Activated CD4-positive, alpha-beta T cell treated with anti-CD3 and anti-CD28 coated beads for 36 hours (primary cell): ENCODE measurements at regions of chr19 and their contacts with region 1.

Region 1: GRCh38 chr19:50556282-50557008 is 11.8 kb downstream of the LRRC4B start:
- DNase-seq: peak; percentile 92
- ATAC-seq: peak; percentile 89
- H3K4me3 Mint-ChIP-seq: peak overlapping the region; percentile 68
- H3K27ac Mint-ChIP-seq: peak overlapping the region; percentile 85
- H3K4me1 Mint-ChIP-seq: peaks cover 2% of the 10 kb centered on the region
- H3K27me3 Mint-ChIP-seq: peaks cover 53% of the 10 kb centered on the region

Region 2: GRCh38 chr19:50486823-50487511 is 69.5 kb before region 1 on chr19:
- CTCF ChIA-PET with region 1: interaction called, 3 read pairs
- POLR2A ChIA-PET with region 1: no interaction called
- intact Hi-C with region 1: loop called in 1 of 2 experiments (anchors 5 kb)
- DNase-seq: peak; percentile 87
- ATAC-seq: peak; percentile 52
- H3K4me3 Mint-ChIP-seq: no peak overlapping the region
- H3K27ac Mint-ChIP-seq: no peak overlapping the region
- H3K4me1 Mint-ChIP-seq: peaks cover 25% of the 10 kb centered on the region
- H3K27me3 Mint-ChIP-seq: no peaks in the 10 kb centered on the region

Region 3: DNA sequence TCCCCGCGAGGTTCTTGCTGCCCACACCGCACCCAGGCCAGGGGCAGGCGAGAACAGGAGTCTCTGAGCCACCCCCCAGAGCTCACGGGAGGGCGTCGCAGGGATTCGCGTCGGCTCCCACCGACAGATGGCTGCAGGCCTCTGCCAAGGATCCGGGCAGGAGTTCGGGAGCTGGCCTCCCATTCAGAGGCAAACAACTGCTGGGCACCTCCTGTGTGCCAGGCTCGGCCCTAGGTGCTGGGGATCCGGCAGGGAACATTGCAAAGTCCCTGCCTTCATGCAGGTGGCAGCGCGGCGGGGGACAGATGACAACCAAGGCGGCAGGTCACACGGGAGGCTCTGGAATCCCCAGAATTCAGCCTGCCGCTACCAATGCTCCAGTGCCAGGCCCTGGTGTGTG is 13.5 kb before region 1 on chr19:
- CTCF ChIA-PET with region 1: interaction called, 45 read pairs
- POLR2A ChIA-PET with region 1: no interaction called
- intact Hi-C with region 1: no loop called
- DNase-seq: no peak
- ATAC-seq: no peak
- H3K4me3 Mint-ChIP-seq: no peak overlapping the region
- H3K27ac Mint-ChIP-seq: no peak overlapping the region
- H3K4me1 Mint-ChIP-seq: no peaks in the 10 kb centered on the region
- H3K27me3 Mint-ChIP-seq: no peaks in the 10 kb centered on the region